Right ventricle myocardium superior (tissue), 1 donor: ENCODE measurements at regions of chr13 and their contacts with region 1.

Region 1: DNA sequence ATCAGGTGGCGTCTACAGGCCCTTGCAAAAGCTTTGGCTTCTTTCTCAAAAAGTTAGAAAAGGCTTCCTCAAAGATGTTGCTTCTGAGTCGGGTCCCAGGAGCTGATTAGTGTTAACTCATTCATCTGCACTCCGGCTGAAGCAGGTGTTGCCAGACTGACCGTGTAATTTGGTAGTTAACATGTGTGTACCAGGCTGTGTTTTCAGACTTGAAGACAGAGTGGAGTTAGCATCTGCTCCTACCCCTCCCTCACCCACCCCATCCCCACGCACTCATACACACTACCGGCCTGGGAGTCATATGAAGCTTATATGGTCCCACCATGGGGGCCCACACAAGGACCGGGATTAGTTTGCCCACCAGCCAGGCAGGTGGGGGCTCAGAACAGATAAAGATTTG is 111.5 kb downstream of the DNAJC15 start:
- DNase-seq: no peak
- ATAC-seq: no peak

Region 2: GRCh38 chr13:42969558-42970172 is 165.2 kb before region 1 on chr13:
- intact Hi-C with region 1: loop called (anchors 2 kb)
- DNase-seq: peak; percentile 87
- ATAC-seq: peak; percentile 94

Region 3: GRCh38 chr13:43041369-43041921 is 93.4 kb before region 1 on chr13:
- intact Hi-C with region 1: no loop called
- DNase-seq: no peak
- ATAC-seq: no peak